ENCODE measurements at regions of chr10 and their contacts with region 1.

Region 1: DNA sequence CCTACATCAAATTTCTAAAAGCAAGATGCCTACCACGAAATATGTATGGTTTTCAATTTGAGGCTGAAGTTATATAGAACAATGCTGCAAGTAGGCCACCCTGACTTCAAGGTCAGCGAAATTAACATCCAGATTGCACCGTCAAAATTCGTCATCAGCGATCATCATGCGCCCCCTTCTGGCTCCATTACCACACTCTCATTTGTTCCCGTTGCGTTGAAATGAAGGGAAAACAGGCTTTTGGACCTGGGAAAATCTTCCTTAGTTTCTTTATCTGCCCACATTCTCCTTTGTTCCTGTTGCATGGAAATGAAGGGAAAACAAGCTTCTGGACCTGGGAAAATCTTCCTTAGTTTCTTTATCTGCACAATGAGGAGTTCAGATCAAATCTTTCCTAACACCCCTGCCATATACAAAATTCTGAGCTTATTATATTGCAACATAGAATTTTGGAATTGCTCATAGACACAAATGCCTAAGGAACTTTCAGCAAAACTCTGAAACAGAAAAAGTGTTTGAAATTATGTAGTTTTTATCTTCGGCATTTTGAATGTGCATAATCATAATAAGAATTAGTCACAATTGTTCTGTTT is 98.2 kb upstream of the PRKCQ start:
- DNase-seq: peak; percentile 22
- ATAC-seq: peak; percentile 48
- H3K4me3 ChIP-seq: no peak overlapping the region
- H3K27ac ChIP-seq: no peak overlapping the region
- H3K4me1 ChIP-seq: no peaks in the 10 kb centered on the region
- H3K27me3 ChIP-seq: no peaks in the 10 kb centered on the region; a peak in 2 of 5 replicates
- CTCF ChIP-seq: peak; percentile 73
- EP300 ChIP-seq: no peak
- POLR2A ChIP-seq: no peak
- RAD21 ChIP-seq: 0 out of 2 replicates have a peak, but pooled peaks have one; percentile 16

Region 2: GRCh38 chr10:6416892-6417512 is 261.3 kb before region 1 on chr10:
- CTCF ChIA-PET with region 1: interaction called, 18 read pairs
- POLR2A ChIA-PET with region 1: no interaction called
- in situ Hi-C with region 1: loop called (anchors 10 kb)
- intact Hi-C with region 1: no loop called
- DNase-seq: peak; percentile 35
- ATAC-seq: peak; percentile 76
- H3K4me3 ChIP-seq: no peak overlapping the region
- H3K27ac ChIP-seq: no peak overlapping the region
- H3K4me1 ChIP-seq: no peaks in the 10 kb centered on the region
- H3K27me3 ChIP-seq: peaks cover 4 to 5% of the 10 kb centered on the region in 2 experiments; a peak in 2 of 5 replicates
- CTCF ChIP-seq: peak; percentile 75
- EP300 ChIP-seq: no peak
- POLR2A ChIP-seq: no peak
- RAD21 ChIP-seq: no peak

Region 3: GRCh38 chr10:6445501-6446316 is 232.6 kb before region 1 on chr10:
- CTCF ChIA-PET with region 1: interaction called, 3 read pairs
- POLR2A ChIA-PET with region 1: no interaction called
- in situ Hi-C with region 1: no loop called
- intact Hi-C with region 1: loop called (anchors 10 kb)
- DNase-seq: peak; percentile 10
- ATAC-seq: peak; percentile 32; the same call in 1 of the 3 replicates
- H3K4me3 ChIP-seq: no peak overlapping the region
- H3K27ac ChIP-seq: no peak overlapping the region
- H3K4me1 ChIP-seq: no peaks in the 10 kb centered on the region
- H3K27me3 ChIP-seq: peaks cover 0 to 3% of the 10 kb centered on the region in 2 experiments; a peak in 1 of 5 replicates
- CTCF ChIP-seq: peak; percentile 58
- EP300 ChIP-seq: no peak
- POLR2A ChIP-seq: no peak
- RAD21 ChIP-seq: no peak

Region 4: DNA sequence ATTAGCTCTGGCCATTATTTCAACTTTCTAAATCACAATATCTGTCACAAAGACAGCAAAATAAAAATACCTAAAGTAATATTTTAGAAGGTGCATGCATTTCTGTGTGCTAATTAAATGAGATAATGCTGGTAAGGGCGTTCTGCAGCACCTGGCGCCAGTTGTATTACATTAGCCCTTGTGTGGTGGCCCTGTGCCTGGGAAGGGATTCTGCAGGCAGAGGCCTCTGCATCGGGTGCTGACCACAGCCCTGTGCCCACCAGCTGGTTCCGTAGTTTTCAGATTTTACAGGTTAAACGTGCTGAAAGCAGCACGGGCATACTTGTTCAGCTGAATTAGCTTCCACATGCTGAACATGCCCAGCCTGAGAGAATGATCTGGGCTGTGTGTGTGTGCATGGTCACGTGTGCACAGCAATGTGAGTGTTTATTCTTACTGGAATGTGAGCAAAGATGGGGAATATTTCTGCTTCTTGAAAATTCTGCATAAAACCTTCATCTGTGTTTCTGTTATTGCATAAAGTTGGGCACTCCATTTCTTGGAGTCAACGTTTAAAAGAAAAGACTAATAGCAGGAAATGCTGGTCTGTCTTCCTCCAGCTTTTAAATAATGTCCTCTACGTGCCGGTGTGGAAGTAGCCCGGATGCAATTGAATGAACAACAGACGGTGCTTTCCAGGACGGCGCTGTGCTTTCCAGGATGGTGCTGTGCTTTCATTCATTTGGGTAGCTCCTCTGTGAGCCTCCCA is 59.6 kb after region 1 on chr10:
- CTCF ChIA-PET with region 1: no interaction called
- POLR2A ChIA-PET with region 1: no interaction called
- in situ Hi-C with region 1: no loop called
- intact Hi-C with region 1: loop called (anchors 10 kb)
- DNase-seq: no peak
- ATAC-seq: peak; percentile 29; the same call in 1 of the 3 replicates
- H3K4me3 ChIP-seq: no peak overlapping the region
- H3K27ac ChIP-seq: no peak overlapping the region
- H3K4me1 ChIP-seq: peaks cover 7% of the 10 kb centered on the region
- H3K27me3 ChIP-seq: 0 out of 5 replicates have a peak, but pooled peaks cover 0 to 1% of the 10 kb centered on the region in 2 experiments
- CTCF ChIP-seq: no peak
- EP300 ChIP-seq: no peak
- POLR2A ChIP-seq: no peak
- RAD21 ChIP-seq: no peak

Region 5: GRCh38 chr10:6755781-6756460 is 77.6 kb after region 1 on chr10:
- CTCF ChIA-PET with region 1: no interaction called
- POLR2A ChIA-PET with region 1: no interaction called
- in situ Hi-C with region 1: no loop called
- intact Hi-C with region 1: no loop called
- DNase-seq: no peak
- ATAC-seq: no peak
- H3K4me3 ChIP-seq: no peak overlapping the region
- H3K27ac ChIP-seq: no peak overlapping the region
- H3K4me1 ChIP-seq: no peaks in the 10 kb centered on the region
- H3K27me3 ChIP-seq: no peaks in the 10 kb centered on the region
- CTCF ChIP-seq: no peak
- EP300 ChIP-seq: no peak
- POLR2A ChIP-seq: no peak
- RAD21 ChIP-seq: no peak

Measured in HepG2 (cell line).